B cell (primary cell): ENCODE measurements at regions of chr6 and their contacts with region 1.

Region 1: DNA sequence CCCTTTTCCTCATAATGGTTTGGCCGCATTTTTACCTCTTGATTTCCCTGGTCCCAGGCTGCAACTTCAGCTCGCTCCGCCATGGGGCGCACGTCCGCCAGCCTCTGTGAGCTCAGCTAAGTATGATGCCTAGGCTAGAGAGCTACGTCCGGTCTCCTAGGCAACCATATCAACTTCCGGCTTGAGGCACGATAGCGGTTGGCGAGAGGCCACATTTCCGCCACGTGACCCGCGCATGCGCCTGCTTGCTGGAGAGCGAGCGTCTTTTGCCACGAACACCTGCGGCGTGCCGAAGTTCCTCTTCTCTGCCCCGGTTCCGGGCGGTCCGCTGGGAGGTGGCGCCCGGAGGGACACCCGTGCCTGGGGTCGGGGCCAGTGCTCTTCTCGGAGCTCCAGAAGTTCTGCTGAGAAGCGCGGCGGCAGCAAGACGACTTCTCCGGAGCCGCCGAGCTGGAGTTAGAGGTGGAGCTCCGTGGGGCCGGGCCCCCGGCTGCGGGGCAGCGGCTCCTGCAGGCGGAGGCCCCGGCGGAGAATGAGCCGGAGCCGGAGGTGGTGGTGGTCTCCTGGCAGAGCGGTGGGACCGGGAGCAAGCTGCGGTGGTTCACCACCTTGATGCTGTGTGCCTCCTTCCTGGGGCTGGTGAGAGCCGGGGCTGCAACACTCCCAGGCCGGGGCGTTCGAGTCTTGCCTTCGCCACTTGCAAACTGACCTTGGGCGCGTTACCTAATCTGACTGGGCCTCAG is 172.0 kb downstream of the SLC16A10 start:
- DNase-seq: peak; percentile 100
- ATAC-seq: peak; percentile 96
- H3K4me3 ChIP-seq: peak overlapping the region; percentile 63 to 91 (median 82)
- H3K4me3 Mint-ChIP-seq: peak overlapping the region; percentile 87
- H3K27ac ChIP-seq: peak overlapping the region; percentile 95
- H3K27ac Mint-ChIP-seq: peak overlapping the region; percentile 98
- H3K4me1 ChIP-seq: peaks cover 17 to 26% of the 10 kb centered on the region in 2 donors
- H3K4me1 Mint-ChIP-seq: peaks cover 25% of the 10 kb centered on the region
- H3K27me3 ChIP-seq: no peaks in the 10 kb centered on the region
- H3K27me3 Mint-ChIP-seq: peaks cover under 1% of the 10 kb centered on the region
- CTCF ChIP-seq: peak; percentile 96

Region 2: DNA sequence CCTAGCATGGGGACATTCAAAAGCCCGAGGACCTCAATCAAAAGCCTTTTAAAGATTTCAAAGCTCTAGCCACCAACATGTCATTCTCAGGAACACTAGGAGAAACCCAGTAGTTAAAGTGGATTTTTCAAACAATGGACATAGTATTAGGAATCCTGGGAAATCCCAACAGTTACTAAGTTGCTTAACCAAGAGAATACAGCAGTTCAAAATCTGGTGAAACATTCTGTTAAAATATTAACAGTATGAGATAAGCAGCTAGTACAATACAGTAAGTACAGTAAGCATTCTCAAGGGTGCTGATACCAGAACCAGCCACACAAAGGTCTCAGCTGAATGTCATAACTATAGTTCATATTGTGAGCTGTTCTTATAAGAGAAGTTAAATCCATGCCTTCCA is 512.6 kb before region 1 on chr6:
- CTCF ChIA-PET with region 1: no interaction called
- POLR2A ChIA-PET with region 1: no interaction called
- intact Hi-C with region 1: no loop called
- DNase-seq: no peak
- ATAC-seq: no peak
- H3K4me3 ChIP-seq: no peak overlapping the region
- H3K4me3 Mint-ChIP-seq: no peak overlapping the region
- H3K27ac ChIP-seq: no peak overlapping the region
- H3K27ac Mint-ChIP-seq: no peak overlapping the region
- H3K4me1 ChIP-seq: peaks cover 0 to 8% of the 10 kb centered on the region in 2 donors
- H3K4me1 Mint-ChIP-seq: peaks cover 21% of the 10 kb centered on the region
- H3K27me3 ChIP-seq: no peaks in the 10 kb centered on the region
- H3K27me3 Mint-ChIP-seq: no peaks in the 10 kb centered on the region
- CTCF ChIP-seq: no peak

Region 3: GRCh38 chr6:110981202-110981600 is 278.1 kb before region 1 on chr6:
- CTCF ChIA-PET with region 1: no interaction called
- POLR2A ChIA-PET with region 1: no interaction called
- intact Hi-C with region 1: loop called (anchors 1 kb)
- DNase-seq: peak; percentile 43
- ATAC-seq: no peak
- H3K4me3 ChIP-seq: peak overlapping the region; percentile 73 to 98 (median 87)
- H3K4me3 Mint-ChIP-seq: peak overlapping the region; percentile 98
- H3K27ac ChIP-seq: peak overlapping the region; percentile 77 to 93
- H3K27ac Mint-ChIP-seq: peak overlapping the region; percentile 99
- H3K4me1 ChIP-seq: peaks cover 13 to 18% of the 10 kb centered on the region in 2 donors
- H3K4me1 Mint-ChIP-seq: peaks cover 34% of the 10 kb centered on the region
- H3K27me3 ChIP-seq: no peaks in the 10 kb centered on the region
- H3K27me3 Mint-ChIP-seq: no peaks in the 10 kb centered on the region
- CTCF ChIP-seq: no peak

Region 4: DNA sequence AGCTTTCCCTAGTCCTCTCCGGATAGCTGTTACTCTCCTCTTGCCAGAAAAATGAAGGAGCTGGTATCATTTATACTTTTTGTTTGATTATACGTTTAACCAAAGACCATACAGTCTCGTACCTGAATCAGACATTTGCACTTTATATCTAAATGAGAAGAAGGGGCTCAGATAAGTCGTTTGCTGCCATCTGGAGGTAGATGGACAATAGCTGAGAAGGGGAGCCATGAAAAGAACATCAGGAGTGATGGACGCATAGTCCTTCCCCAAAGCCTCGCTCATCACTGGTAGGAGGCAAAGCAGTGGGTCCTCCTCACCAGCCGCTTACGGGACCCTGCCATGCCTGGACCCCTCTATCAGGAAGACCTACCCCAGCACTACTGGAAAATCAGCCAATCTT is 232.0 kb before region 1 on chr6:
- CTCF ChIA-PET with region 1: no interaction called
- POLR2A ChIA-PET with region 1: no interaction called
- intact Hi-C with region 1: no loop called
- DNase-seq: no peak
- ATAC-seq: no peak
- H3K4me3 ChIP-seq: no peak overlapping the region
- H3K4me3 Mint-ChIP-seq: no peak overlapping the region
- H3K27ac ChIP-seq: no peak overlapping the region
- H3K27ac Mint-ChIP-seq: no peak overlapping the region
- H3K4me1 ChIP-seq: no peaks in the 10 kb centered on the region
- H3K4me1 Mint-ChIP-seq: no peaks in the 10 kb centered on the region
- H3K27me3 ChIP-seq: no peaks in the 10 kb centered on the region
- H3K27me3 Mint-ChIP-seq: no peaks in the 10 kb centered on the region
- CTCF ChIP-seq: no peak

Region 5: DNA sequence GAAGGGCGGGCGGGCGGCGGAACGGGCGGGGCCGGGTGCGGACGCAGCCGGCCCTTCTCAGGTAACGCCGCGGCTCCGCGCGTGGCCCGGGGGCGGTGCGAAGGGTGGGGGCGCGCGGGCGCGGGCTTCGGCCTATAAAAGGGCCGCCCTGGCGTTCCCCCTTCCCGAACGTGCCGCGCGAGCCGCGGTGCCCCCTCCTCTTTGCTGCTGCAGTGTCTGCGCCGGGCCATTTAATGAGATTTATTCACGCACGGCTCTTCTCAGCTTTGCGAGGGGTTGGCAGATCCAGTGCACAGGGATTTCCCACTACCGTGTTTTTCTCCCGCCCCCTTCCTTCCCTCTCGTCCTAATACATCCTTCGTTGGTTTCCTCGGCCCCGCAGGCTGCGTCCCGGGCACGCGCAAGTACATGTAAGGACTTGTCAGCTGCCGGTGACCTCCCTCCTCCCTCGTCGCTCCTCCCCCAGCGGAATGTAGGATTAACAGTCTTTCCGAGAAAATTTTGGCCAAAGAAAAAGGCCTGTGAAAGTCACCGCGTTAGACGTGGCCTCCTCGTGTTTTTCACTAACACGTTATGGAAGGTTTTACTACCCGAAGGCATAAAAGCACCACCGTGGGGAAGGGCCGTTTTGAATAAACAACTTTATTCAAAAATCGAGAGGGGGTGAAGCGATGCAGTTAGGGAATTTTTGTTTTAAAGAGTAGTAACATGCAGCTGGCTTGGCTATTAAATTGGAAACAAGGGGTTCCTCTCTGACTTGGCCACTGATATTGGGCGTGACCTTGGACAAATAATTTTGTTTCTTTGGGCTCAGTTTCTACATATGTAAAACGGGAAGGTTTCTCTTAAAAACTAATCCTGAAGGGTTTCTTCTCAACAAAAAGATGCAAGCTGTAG is 224.7 kb after region 1 on chr6:
- CTCF ChIA-PET with region 1: interaction called, 119 read pairs
- POLR2A ChIA-PET with region 1: interaction called, 26 read pairs
- intact Hi-C with region 1: loop called (anchors 1 kb)
- DNase-seq: no peak
- ATAC-seq: peak; percentile 68
- H3K4me3 ChIP-seq: peak overlapping the region; percentile 72 to 97 (median 88)
- H3K4me3 Mint-ChIP-seq: peak overlapping the region; percentile 96
- H3K27ac ChIP-seq: peak overlapping the region; percentile 98 to 99
- H3K27ac Mint-ChIP-seq: peak overlapping the region; percentile 99
- H3K4me1 ChIP-seq: peaks cover 16 to 18% of the 10 kb centered on the region in 2 donors
- H3K4me1 Mint-ChIP-seq: peaks cover 45% of the 10 kb centered on the region
- H3K27me3 ChIP-seq: no peaks in the 10 kb centered on the region
- H3K27me3 Mint-ChIP-seq: no peaks in the 10 kb centered on the region
- CTCF ChIP-seq: no peak

Region 6: GRCh38 chr6:111605100-111605751 is 346.0 kb after region 1 on chr6:
- CTCF ChIA-PET with region 1: interaction called, 7 read pairs
- POLR2A ChIA-PET with region 1: interaction called, 4 read pairs
- intact Hi-C with region 1: loop called (anchors 1 kb)
- DNase-seq: no peak
- ATAC-seq: peak; percentile 46
- H3K4me3 ChIP-seq: peak overlapping the region; percentile 60 to 89 (median 82)
- H3K4me3 Mint-ChIP-seq: peak overlapping the region; percentile 93
- H3K27ac ChIP-seq: peak overlapping the region; percentile 76 to 78
- H3K27ac Mint-ChIP-seq: peak overlapping the region; percentile 89
- H3K4me1 ChIP-seq: peaks cover 22 to 25% of the 10 kb centered on the region in 2 donors
- H3K4me1 Mint-ChIP-seq: peaks cover 44% of the 10 kb centered on the region
- H3K27me3 ChIP-seq: no peaks in the 10 kb centered on the region
- H3K27me3 Mint-ChIP-seq: no peaks in the 10 kb centered on the region
- CTCF ChIP-seq: no peak

Region 7: GRCh38 chr6:112087136-112087911 is 828.1 kb after region 1 on chr6 and contains the starts of genes FAM229B and TUBE1:
- CTCF ChIA-PET with region 1: no interaction called
- POLR2A ChIA-PET with region 1: no interaction called
- intact Hi-C with region 1: loop called (anchors 1 kb)
- DNase-seq: peak; percentile 96
- ATAC-seq: peak; percentile 97
- H3K4me3 ChIP-seq: peak within 1 kb of the TSS; percentile 69 to 88 (median 83)
- H3K4me3 Mint-ChIP-seq: no peak within 1 kb of the TSS
- H3K27ac ChIP-seq: peak within 1 kb of the TSS; percentile 84
- H3K27ac Mint-ChIP-seq: no peak within 1 kb of the TSS
- H3K4me1 ChIP-seq: peaks cover 7 to 8% of the 10 kb centered on the region in 2 donors
- H3K4me1 Mint-ChIP-seq: no peaks in the 10 kb centered on the region
- H3K27me3 ChIP-seq: peaks cover 0 to 14% (median 5%) of the 10 kb centered on the region in 4 experiments
- H3K27me3 Mint-ChIP-seq: peaks cover 15% of the 10 kb centered on the region
- CTCF ChIP-seq: no peak
- total RNA-seq, gene FAM229B: 4.0 and 4.4 TPM in 2 replicates
- total RNA-seq, gene TUBE1: 24.5 and 26.7 TPM in 2 replicates